PC-9 (cell line): ENCODE measurements at regions of chr7 and their contacts with region 1.

Region 1: GRCh38 chr7:133252858-133253518 is at the start of gene EXOC4:
- DNase-seq: peak; percentile 94 to 96
- H3K4me3 ChIP-seq: peak within 1 kb of the TSS; percentile 86
- H3K27ac ChIP-seq: peak within 1 kb of the TSS; percentile 27
- H3K4me1 ChIP-seq: peaks cover 12% of the 10 kb centered on the region
- H3K27me3 ChIP-seq: no peaks in the 10 kb centered on the region
- CTCF ChIP-seq: no peak
- total RNA-seq, gene EXOC4: 88.5 and 101 TPM in 2 replicates

Region 2: DNA sequence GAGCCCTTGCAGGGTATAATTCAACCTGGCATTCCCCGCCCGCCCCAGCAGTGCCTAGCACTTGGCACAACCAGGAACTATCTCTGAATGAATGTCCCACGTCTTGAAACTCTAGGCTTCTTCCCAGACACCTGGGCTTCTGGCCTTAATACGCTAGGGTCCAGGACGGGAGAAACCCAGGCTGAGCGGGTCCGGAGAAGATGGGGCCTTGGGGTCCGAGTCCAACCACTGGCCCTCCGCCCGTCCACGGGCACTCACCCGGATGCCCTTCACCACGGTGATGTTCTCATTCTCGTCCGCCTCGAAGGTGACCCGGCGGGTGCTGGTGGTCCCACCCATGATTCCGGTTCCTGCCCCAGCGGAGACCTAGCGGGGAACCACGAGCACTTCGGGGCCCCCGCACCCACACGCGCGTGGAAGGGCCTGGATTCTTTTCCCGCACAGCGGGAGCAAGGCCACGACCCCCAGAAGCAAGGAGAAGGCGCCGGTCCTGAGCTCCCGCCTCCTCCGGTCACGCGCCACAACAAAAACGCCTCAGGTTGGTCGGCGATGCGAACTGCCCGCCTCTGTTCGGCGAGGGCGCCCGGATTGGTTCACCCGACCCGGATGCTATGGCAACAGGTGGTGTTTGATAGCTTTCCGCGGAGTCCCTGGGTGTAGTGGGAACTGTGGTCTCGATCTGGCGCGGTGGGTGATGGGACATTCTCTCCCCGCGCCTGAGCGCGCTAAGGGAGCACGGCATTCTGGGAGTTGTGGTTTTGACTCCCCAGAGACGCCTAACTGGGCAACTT is 171.2 kb before region 1 on chr7 and contains the start of gene CHCHD3:
- CTCF ChIA-PET with region 1: interaction called, 3 read pairs
- POLR2A ChIA-PET with region 1: no interaction called
- intact Hi-C with region 1: loop called (anchors 10 kb)
- DNase-seq: peak; percentile 98
- H3K4me3 ChIP-seq: peak within 1 kb of the TSS; percentile 88
- H3K27ac ChIP-seq: 0 out of 2 replicates have a peak within 1 kb of the TSS, but pooled peaks have one; percentile 10
- H3K4me1 ChIP-seq: peaks cover 9% of the 10 kb centered on the region; the same call in 1 of the 2 replicates
- H3K27me3 ChIP-seq: peaks cover 14% of the 10 kb centered on the region; the same call in 1 of the 2 replicates
- CTCF ChIP-seq: no peak
- total RNA-seq, gene CHCHD3: 77.7 and 100 TPM in 2 replicates

Region 3: GRCh38 chr7:134900166-134900982 is 1647.4 kb after region 1 on chr7:
- CTCF ChIA-PET with region 1: no interaction called
- POLR2A ChIA-PET with region 1: interaction called, 14 read pairs
- intact Hi-C with region 1: no loop called
- DNase-seq: no peak
- H3K4me3 ChIP-seq: no peak overlapping the region
- H3K27ac ChIP-seq: no peak overlapping the region
- H3K4me1 ChIP-seq: peaks cover 10% of the 10 kb centered on the region
- H3K27me3 ChIP-seq: no peaks in the 10 kb centered on the region
- CTCF ChIP-seq: no peak